ENCODE measurements at regions of chr3 and their contacts with region 1.

Region 1: GRCh38 chr3:15427182-15427880 is at the starts of genes EAF1 and METTL6:
- DNase-seq: peak; percentile 84
- ATAC-seq: peak; percentile 92 to 97 (median 94)
- H3K4me3 ChIP-seq: peak within 1 kb of the TSS; percentile 75 to 100 (median 90)
- H3K27ac ChIP-seq: peak within 1 kb of the TSS; percentile 21 to 96 (median 86)
- H3K4me1 ChIP-seq: peaks cover 5 to 62% (median 39%) of the 10 kb centered on the region in 9 donors
- H3K27me3 ChIP-seq: no peaks in the 10 kb centered on the region
- CTCF ChIP-seq: peak in 6 of 9 donors; percentile 24 to 35 (median 27)
- total RNA-seq, gene EAF1: 7.0 to 12.4 (median 8.5) TPM
- total RNA-seq, gene METTL6: 7.1 to 11.3 (median 9.4) TPM

Region 2: DNA sequence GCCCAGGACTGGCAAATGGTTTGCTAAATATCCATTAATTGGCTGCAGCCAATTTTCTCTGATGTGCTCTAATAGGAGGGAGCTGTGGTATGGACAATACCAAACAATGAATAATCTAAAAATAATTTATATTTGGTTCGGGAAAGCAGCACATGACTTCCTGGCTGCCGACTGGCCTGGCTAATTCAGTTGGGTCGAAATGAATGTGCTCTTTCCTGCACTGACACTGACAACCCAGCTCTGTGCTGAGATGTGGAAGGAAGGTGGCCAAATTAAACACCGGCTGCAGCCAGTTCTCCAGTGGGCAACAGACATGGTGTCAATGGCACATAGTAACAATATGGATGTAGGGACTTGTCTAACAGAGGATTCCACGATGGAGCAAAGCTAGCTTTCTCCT is 115.3 kb after region 1 on chr3:
- intact Hi-C with region 1: loop called in 1 of 10 experiments (anchors 5 kb)
- DNase-seq: no peak
- ATAC-seq: peak; percentile 49 to 90 (median 84)
- H3K4me3 ChIP-seq: no peak overlapping the region
- H3K27ac ChIP-seq: peak overlapping the region in 6 of 10 donors; percentile 3 to 35 (median 18)
- H3K4me1 ChIP-seq: peaks cover 0 to 19% (median 12%) of the 10 kb centered on the region in 9 donors
- H3K27me3 ChIP-seq: no peaks in the 10 kb centered on the region
- CTCF ChIP-seq: no peak

Region 3: DNA sequence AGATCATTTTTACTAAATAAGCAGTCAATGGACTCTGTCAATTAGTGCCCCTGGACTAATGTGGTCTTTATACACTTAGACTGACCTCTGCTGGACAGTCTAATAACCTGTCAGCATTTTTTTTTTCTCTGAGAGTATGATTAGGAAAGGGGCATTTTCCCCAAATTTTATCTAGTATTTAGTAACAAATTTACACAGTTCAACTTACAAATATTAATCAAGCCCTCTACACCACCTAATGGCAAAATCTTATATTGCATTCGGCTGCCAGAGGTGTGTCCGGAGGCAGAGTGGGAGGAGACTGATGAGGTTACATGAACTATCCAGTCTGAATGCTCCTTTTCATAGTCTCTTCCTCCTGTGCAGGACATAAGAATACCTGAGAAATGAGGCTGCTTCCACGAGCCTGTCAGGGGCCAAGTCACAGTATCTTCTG is 130.2 kb after region 1 on chr3:
- intact Hi-C with region 1: loop called in 9 of 10 experiments (anchors 5 to 10 kb)
- DNase-seq: peak in 1 of 2 donors; percentile 55
- ATAC-seq: peak; percentile 59 to 83 (median 75)
- H3K4me3 ChIP-seq: no peak overlapping the region
- H3K27ac ChIP-seq: peak overlapping the region in 1 of 10 donors; percentile 73
- H3K4me1 ChIP-seq: peaks cover 0 to 15% (median 0%) of the 10 kb centered on the region in 9 donors
- H3K27me3 ChIP-seq: no peaks in the 10 kb centered on the region
- CTCF ChIP-seq: peak; percentile 40 to 76 (median 68)

Region 4: DNA sequence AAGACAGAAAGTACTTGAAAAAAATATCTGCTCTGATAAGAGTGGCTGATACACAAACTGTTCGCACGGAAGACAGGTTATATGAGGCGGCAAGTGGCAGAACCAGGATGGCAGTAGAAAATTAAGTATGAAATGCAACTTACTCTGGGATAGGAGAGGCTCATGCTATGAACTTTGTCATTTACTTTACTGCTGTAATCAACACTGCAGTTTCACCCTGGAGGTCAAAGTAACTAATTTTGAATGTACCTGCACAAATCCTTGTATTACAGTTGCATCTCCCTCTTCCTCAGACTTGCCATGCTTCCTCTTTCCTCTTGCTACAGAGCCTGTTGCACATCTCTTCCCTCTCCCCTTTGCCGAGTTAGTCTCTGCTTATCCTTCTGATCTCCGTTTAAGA is 135.2 kb after region 1 on chr3:
- intact Hi-C with region 1: loop called in 9 of 10 experiments (anchors 5 to 10 kb)
- DNase-seq: no peak
- ATAC-seq: no peak
- H3K4me3 ChIP-seq: no peak overlapping the region
- H3K27ac ChIP-seq: no peak overlapping the region
- H3K4me1 ChIP-seq: peaks cover 0 to 3% (median 0%) of the 10 kb centered on the region in 9 donors
- H3K27me3 ChIP-seq: no peaks in the 10 kb centered on the region
- CTCF ChIP-seq: no peak

Measured in heart right ventricle (tissue), 16 donors.